ENCODE measurements at regions of chr5 and their contacts with region 1.

Region 1: GRCh38 chr5:75336625-75337339 is at the start of gene HMGCR:
- DNase-seq: peak; percentile 89
- ATAC-seq: peak; percentile 95
- H3K4me3 Mint-ChIP-seq: no peak within 1 kb of the TSS
- H3K27ac Mint-ChIP-seq: no peak within 1 kb of the TSS
- H3K4me1 Mint-ChIP-seq: peaks cover 30% of the 10 kb centered on the region
- H3K27me3 Mint-ChIP-seq: no peaks in the 10 kb centered on the region
- CTCF ChIP-seq: no peak
- total RNA-seq, gene HMGCR: 105 and 131 TPM in 2 replicates

Region 2: GRCh38 chr5:74684900-74685851 is 651.6 kb before region 1 on chr5 and contains the start of gene HEXB:
- CTCF ChIA-PET with region 1: no interaction called
- POLR2A ChIA-PET with region 1: no interaction called
- intact Hi-C with region 1: loop called (anchors 2 kb)
- DNase-seq: peak; percentile 77
- ATAC-seq: peak; percentile 86
- H3K4me3 Mint-ChIP-seq: peak within 1 kb of the TSS; percentile 81
- H3K27ac Mint-ChIP-seq: peak within 1 kb of the TSS; percentile 63
- H3K4me1 Mint-ChIP-seq: peaks cover 18% of the 10 kb centered on the region
- H3K27me3 Mint-ChIP-seq: no peaks in the 10 kb centered on the region
- CTCF ChIP-seq: no peak
- total RNA-seq, gene HEXB: 34.5 and 43.2 TPM in 2 replicates

Region 3: GRCh38 chr5:75167345-75167744 is 169.4 kb before region 1 on chr5:
- CTCF ChIA-PET with region 1: no interaction called
- POLR2A ChIA-PET with region 1: no interaction called
- intact Hi-C with region 1: no loop called
- DNase-seq: no peak
- ATAC-seq: no peak
- H3K4me3 Mint-ChIP-seq: no peak overlapping the region
- H3K27ac Mint-ChIP-seq: no peak overlapping the region
- H3K4me1 Mint-ChIP-seq: no peaks in the 10 kb centered on the region
- H3K27me3 Mint-ChIP-seq: no peaks in the 10 kb centered on the region
- CTCF ChIP-seq: no peak

Region 4: DNA sequence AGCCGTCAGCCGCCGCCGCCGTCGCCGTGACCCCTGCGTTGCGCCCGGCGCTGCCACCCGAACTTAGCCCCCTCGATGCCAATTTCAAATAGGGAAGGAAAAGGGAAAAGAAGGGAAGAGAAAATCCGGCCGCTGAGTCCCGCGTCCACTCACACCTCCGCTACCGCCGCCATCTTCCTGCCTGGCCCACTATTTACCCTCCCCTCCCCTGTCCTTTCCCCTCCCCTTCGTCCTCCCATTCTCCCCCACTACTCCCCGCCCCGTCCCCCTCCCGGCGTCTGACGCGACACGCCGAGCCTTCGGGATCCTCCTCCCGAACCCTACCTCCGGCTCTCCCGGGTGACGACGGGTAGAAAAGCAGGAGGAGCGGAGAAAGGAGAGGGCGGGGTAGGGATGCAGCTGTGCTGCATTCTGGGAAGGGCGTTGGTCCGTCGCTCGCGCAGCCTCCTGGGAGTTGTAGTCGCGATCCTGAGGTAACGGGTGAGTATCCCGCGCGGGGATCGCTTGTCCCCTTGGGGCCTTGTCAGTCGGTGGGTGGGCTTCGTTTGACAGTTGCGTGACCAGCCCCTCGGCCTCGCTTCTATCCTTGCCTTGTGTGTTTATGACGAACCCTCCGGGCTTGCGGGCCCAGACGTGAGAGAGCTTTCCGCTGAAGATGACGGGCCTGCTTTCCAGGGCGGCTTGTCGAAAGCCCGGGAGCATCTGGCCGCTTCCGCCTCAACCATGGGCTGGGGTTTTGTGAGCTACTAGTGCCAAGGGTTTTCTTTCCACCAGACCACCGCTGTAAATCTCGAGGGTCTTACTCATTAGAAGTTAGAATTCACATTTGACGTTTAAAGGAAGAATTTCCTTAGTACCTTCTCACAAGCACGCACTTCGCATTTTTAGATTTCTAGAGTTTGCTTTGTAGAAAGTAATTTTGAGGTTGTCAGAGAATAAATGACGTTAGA is 174.9 kb after region 1 on chr5 and contains the starts of genes CERT1 and POLK:
- CTCF ChIA-PET with region 1: no interaction called
- POLR2A ChIA-PET with region 1: interaction called, 19 read pairs
- intact Hi-C with region 1: loop called (anchors 1 kb)
- DNase-seq: peak; percentile 85
- ATAC-seq: peak; percentile 90
- H3K4me3 Mint-ChIP-seq: peak within 1 kb of the TSS; percentile 95
- H3K27ac Mint-ChIP-seq: peak within 1 kb of the TSS; percentile 95
- H3K4me1 Mint-ChIP-seq: peaks cover 70% of the 10 kb centered on the region
- H3K27me3 Mint-ChIP-seq: no peaks in the 10 kb centered on the region
- CTCF ChIP-seq: no peak
- total RNA-seq, gene CERT1: 39.1 and 49.5 TPM in 2 replicates
- total RNA-seq, gene POLK: 29.0 and 34.0 TPM in 2 replicates

Region 5: DNA sequence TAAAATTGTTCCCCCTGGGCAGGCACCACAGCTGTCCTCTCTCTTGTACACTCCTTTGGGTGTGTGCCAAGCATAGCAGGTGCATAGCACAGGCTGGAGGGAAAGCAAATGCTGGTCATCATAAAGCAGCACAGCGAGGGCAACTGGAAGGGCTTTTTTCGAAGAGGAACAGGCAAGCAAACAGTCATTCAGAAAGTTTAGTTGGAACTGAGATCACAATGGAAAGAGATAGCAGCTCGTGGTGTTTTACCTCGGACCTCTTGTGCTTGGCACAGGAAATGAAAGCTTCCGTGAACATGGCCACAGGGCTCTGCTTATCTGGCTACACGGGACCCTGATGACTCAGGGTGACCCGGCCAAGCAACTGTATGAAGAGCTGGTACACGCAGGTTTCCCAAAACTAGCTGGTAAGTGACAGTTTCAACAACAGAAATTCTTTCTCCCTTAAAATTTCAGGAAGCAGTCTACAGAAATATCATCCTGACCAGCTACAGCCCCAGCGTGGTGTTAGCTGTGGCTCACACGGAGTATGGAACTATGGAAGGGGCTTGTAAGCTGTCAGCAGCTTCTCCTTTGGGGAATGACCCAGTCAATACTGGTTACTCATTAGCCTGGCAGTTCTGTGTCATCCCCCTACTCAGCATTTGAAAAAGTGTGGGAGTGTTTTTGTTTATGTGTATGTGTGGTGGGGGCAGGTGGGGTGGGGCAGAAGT is 332.4 kb after region 1 on chr5:
- CTCF ChIA-PET with region 1: no interaction called
- POLR2A ChIA-PET with region 1: no interaction called
- intact Hi-C with region 1: loop called (anchors 5 kb)
- DNase-seq: no peak
- ATAC-seq: peak; percentile 94
- H3K4me3 Mint-ChIP-seq: peak overlapping the region; percentile 80
- H3K27ac Mint-ChIP-seq: peak overlapping the region; percentile 73
- H3K4me1 Mint-ChIP-seq: peaks cover 16% of the 10 kb centered on the region
- H3K27me3 Mint-ChIP-seq: no peaks in the 10 kb centered on the region
- CTCF ChIP-seq: no peak

Measured in activated B cell treated with CpG ODN at 0.5 μM for 24 hours (primary cell).